B cell (primary cell): ENCODE measurements at regions of chr2 and their contacts with region 1.

Region 1: GRCh38 chr2:68789603-68790002 is 55.0 kb downstream of the ARHGAP25 start:
- DNase-seq: peak; percentile 96
- ATAC-seq: peak; percentile 89
- H3K4me3 ChIP-seq: peak overlapping the region in 1 of 5 experiments; percentile 27
- H3K4me3 Mint-ChIP-seq: peak overlapping the region; percentile 80
- H3K27ac ChIP-seq: peak overlapping the region; percentile 91 to 96
- H3K27ac Mint-ChIP-seq: peak overlapping the region; percentile 99
- H3K4me1 ChIP-seq: peaks cover 94 to 96% of the 10 kb centered on the region in 2 donors
- H3K4me1 Mint-ChIP-seq: peaks cover 55% of the 10 kb centered on the region
- H3K27me3 ChIP-seq: no peaks in the 10 kb centered on the region
- H3K27me3 Mint-ChIP-seq: no peaks in the 10 kb centered on the region
- CTCF ChIP-seq: no peak

Region 2: GRCh38 chr2:68715353-68716041 is 74.1 kb before region 1 on chr2:
- CTCF ChIA-PET with region 1: interaction called, 27 read pairs
- POLR2A ChIA-PET with region 1: interaction called, 7 read pairs
- intact Hi-C with region 1: loop called (anchors 2 kb)
- DNase-seq: peak; percentile 70
- ATAC-seq: peak; percentile 37
- H3K4me3 ChIP-seq: peak overlapping the region in 1 of 5 experiments; percentile 17
- H3K4me3 Mint-ChIP-seq: peak overlapping the region; percentile 33
- H3K27ac ChIP-seq: peak overlapping the region; percentile 59 to 78
- H3K27ac Mint-ChIP-seq: peak overlapping the region; percentile 83
- H3K4me1 ChIP-seq: peaks cover 45 to 50% of the 10 kb centered on the region in 2 donors
- H3K4me1 Mint-ChIP-seq: peaks cover 69% of the 10 kb centered on the region
- H3K27me3 ChIP-seq: no peaks in the 10 kb centered on the region
- H3K27me3 Mint-ChIP-seq: no peaks in the 10 kb centered on the region
- CTCF ChIP-seq: peak; percentile 57

Region 3: DNA sequence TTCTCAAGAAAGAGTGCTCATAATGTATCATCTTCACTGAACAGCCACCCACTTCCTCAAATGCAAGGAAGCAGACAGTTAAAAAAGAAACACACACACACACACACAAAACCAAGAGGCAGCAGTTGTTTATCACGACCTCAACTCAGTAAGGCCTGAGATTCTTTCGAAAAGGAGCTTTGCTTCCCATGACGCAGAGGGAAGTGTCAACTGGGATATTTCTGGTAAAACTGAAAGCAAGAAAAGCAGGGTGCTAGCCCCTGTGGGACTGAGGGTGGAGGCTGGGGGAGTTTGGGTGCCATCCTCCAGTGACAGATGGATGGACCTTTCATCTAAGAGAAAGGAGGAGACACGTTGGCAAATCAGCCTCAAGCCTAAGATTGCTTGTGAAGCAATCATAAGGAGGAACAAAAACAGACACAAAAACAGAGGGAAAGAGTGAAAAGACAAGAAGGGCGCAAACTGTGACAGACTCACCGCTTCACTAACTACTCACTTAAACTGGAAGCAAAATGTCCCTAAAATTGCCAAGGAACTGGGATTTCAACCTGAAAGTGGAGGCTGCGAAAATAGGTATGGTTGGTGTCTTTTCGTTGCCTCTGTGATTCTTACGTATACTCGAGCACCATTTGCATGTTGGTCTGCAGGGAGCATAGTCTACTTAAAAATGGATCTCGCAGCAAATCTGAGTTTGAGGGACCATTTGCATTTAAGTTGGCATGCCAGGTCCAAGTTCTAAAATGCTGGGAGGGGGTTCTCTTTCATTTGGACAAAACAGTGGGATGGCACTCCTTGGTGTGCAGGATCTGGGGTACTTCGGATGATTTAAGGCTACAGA is 54.7 kb before region 1 on chr2 and contains the start of gene ARHGAP25:
- CTCF ChIA-PET with region 1: interaction called, 6 read pairs
- POLR2A ChIA-PET with region 1: interaction called, 4 read pairs
- intact Hi-C with region 1: loop called (anchors 1 kb)
- DNase-seq: peak; percentile 83
- ATAC-seq: peak; percentile 78
- H3K4me3 ChIP-seq: peak within 1 kb of the TSS; percentile 47 to 92 (median 64)
- H3K4me3 Mint-ChIP-seq: no peak within 1 kb of the TSS
- H3K27ac ChIP-seq: peak within 1 kb of the TSS; percentile 93
- H3K27ac Mint-ChIP-seq: no peak within 1 kb of the TSS
- H3K4me1 ChIP-seq: peaks cover 66 to 77% of the 10 kb centered on the region in 2 donors
- H3K4me1 Mint-ChIP-seq: peaks cover 55% of the 10 kb centered on the region
- H3K27me3 ChIP-seq: no peaks in the 10 kb centered on the region
- H3K27me3 Mint-ChIP-seq: no peaks in the 10 kb centered on the region
- CTCF ChIP-seq: no peak
- total RNA-seq, gene ARHGAP25: 207 and 221 TPM in 2 replicates

Region 4: GRCh38 chr2:68774569-68775271 is 14.9 kb before region 1 on chr2:
- CTCF ChIA-PET with region 1: interaction called, 101 read pairs
- POLR2A ChIA-PET with region 1: interaction called, 58 read pairs
- intact Hi-C with region 1: loop called (anchors 1 kb)
- DNase-seq: peak; percentile 91
- ATAC-seq: peak; percentile 80
- H3K4me3 ChIP-seq: peak overlapping the region; percentile 79 to 96 (median 91)
- H3K4me3 Mint-ChIP-seq: peak overlapping the region; percentile 99
- H3K27ac ChIP-seq: peak overlapping the region; percentile 93 to 99
- H3K27ac Mint-ChIP-seq: peak overlapping the region; percentile 98
- H3K4me1 ChIP-seq: peaks cover 83 to 88% of the 10 kb centered on the region in 2 donors
- H3K4me1 Mint-ChIP-seq: peaks cover 80% of the 10 kb centered on the region
- H3K27me3 ChIP-seq: no peaks in the 10 kb centered on the region
- H3K27me3 Mint-ChIP-seq: no peaks in the 10 kb centered on the region
- CTCF ChIP-seq: no peak

Region 5: DNA sequence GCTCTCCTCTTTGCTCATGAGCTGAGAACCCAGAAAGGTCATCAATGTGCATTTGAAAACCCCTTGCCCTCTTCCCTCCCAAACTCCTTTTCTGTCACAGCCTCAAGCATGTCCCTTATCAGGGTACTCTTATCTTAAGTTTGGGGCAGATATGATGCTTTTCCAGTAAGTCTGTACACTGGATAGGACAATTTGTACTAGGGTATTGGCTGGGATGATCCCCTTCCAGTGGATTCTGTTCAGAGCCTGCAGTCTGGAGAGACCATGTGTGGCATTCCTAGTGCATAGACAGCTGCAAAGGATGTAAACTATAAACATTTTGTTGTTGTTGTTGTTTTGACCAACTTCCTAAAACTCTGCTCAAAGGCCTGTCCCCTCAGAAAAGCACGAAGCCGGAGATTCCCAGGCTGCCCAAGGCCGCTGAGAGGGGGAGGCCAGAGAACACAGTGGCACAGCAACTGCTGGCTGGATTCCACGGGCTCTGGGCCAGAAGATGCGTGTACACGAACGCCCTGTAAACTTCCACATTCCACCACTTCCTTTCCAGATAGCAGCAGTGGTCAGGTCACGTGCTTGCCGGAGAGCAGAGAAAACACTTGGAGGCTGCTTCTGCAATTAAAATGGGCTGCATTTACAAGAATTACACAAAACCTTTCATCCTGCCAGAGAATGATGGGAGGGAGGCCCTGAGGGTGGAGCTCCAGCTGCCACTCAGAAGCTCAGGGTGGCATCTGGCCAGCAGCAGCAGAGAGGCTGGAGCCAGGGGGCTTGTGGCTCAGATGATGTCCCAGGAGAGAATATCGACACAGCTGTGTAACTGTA is 39.5 kb after region 1 on chr2:
- CTCF ChIA-PET with region 1: no interaction called
- POLR2A ChIA-PET with region 1: interaction called, 4 read pairs
- intact Hi-C with region 1: loop called (anchors 1 kb)
- DNase-seq: peak; percentile 60
- ATAC-seq: peak; percentile 21
- H3K4me3 ChIP-seq: no peak overlapping the region
- H3K4me3 Mint-ChIP-seq: peak overlapping the region; percentile 60
- H3K27ac ChIP-seq: peak overlapping the region; percentile 14 to 44
- H3K27ac Mint-ChIP-seq: peak overlapping the region; percentile 83
- H3K4me1 ChIP-seq: peaks cover 44 to 46% of the 10 kb centered on the region in 2 donors
- H3K4me1 Mint-ChIP-seq: peaks cover 67% of the 10 kb centered on the region
- H3K27me3 ChIP-seq: no peaks in the 10 kb centered on the region
- H3K27me3 Mint-ChIP-seq: no peaks in the 10 kb centered on the region
- CTCF ChIP-seq: no peak

Region 6: GRCh38 chr2:69222953-69223658 is 433.5 kb after region 1 on chr2:
- CTCF ChIA-PET with region 1: no interaction called
- POLR2A ChIA-PET with region 1: no interaction called
- intact Hi-C with region 1: no loop called
- DNase-seq: no peak
- ATAC-seq: no peak
- H3K4me3 ChIP-seq: no peak overlapping the region
- H3K4me3 Mint-ChIP-seq: no peak overlapping the region
- H3K27ac ChIP-seq: no peak overlapping the region
- H3K27ac Mint-ChIP-seq: no peak overlapping the region
- H3K4me1 ChIP-seq: no peaks in the 10 kb centered on the region
- H3K4me1 Mint-ChIP-seq: no peaks in the 10 kb centered on the region
- H3K27me3 ChIP-seq: peaks cover 0 to 6% (median 0%) of the 10 kb centered on the region in 4 experiments
- H3K27me3 Mint-ChIP-seq: peaks cover 31% of the 10 kb centered on the region
- CTCF ChIP-seq: no peak